Mammary epithelial cell (primary cell): ENCODE measurements at regions of chr5 and their contacts with region 1.

Region 1: GRCh38 chr5:155402927-155403670 is 389.5 kb downstream of the KIF4B start:
- DNase-seq: peak; percentile 99
- H3K4me3 ChIP-seq: no peak overlapping the region
- H3K27ac ChIP-seq: peak overlapping the region; percentile 75
- H3K4me1 ChIP-seq: peaks cover 16% of the 10 kb centered on the region
- H3K27me3 ChIP-seq: no peaks in the 10 kb centered on the region
- CTCF ChIP-seq: peak in 1 of 2 donors; percentile 1

Region 2: DNA sequence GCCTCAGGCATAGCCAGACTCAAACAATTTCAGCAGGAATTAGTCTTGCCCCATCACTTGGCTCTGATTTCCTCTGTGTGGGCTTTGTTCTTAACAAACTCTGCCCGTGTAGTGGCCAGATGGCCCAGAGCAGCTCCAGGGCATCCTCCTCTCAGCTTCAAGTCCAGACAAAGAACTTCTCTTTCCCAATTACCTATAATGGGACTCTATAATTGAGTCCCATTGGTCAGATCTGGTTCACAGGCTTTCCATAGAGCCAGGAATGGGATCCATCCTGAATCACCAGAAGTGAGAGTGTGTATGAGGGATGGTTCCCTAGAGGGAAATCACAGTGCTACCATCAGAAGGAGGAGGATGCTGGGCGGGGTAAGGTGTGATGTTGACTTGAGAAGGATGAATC is 126.3 kb after region 1 on chr5:
- CTCF ChIA-PET with region 1: no interaction called
- dilution Hi-C with region 1: no loop called
- in situ Hi-C with region 1: no loop called
- intact Hi-C with region 1: loop called (anchors 1 kb)
- DNase-seq: peak; percentile 100
- H3K4me3 ChIP-seq: no peak overlapping the region
- H3K27ac ChIP-seq: peak overlapping the region; percentile 97
- H3K4me1 ChIP-seq: peaks cover 57% of the 10 kb centered on the region
- H3K27me3 ChIP-seq: no peaks in the 10 kb centered on the region
- CTCF ChIP-seq: no peak